Heart right ventricle (tissue), 16 donors: ENCODE measurements at regions of chr16 and their contacts with region 1.

Region 1: GRCh38 chr16:71311553-71312158 is 22.5 kb upstream of the CMTR2 start:
- DNase-seq: no peak
- ATAC-seq: no peak
- H3K4me3 ChIP-seq: no peak overlapping the region
- H3K27ac ChIP-seq: no peak overlapping the region
- H3K4me1 ChIP-seq: no peaks in the 10 kb centered on the region
- H3K27me3 ChIP-seq: peaks cover 0 to 46% (median 19%) of the 10 kb centered on the region in 7 donors
- CTCF ChIP-seq: peak; percentile 41 to 79 (median 69)

Region 2: DNA sequence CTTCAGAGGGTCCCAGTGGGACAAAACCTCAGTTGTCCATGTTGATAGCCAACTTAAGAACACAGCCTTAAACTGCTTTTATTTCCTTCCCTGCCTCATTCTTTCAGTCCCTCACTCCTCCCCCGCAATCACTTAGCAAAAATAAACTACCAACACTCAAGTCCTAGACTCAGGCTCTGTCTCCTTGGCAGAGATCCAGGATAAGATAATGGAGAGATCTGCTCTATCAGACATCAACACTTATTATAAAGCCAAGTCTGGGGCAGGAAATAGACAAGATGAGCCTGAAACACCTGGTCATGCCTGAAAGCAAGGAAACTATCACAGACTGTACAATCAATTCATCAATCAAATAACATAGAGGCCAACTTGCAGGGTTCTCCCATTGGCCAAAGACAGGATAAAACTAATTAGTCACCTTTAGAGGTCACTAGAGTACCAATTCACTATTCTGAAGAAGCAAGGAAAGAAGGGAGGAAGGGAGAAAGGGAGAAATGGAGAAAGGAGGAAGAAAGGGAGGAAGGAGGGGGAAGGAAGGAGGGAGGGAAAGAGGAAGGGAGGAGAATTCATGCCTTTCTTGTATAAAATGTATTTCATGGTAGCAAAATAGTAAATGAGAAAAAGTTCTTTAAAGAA is 96.8 kb before region 1 on chr16:
- intact Hi-C with region 1: loop called in 2 of 10 experiments (anchors 10 kb)
- DNase-seq: no peak
- ATAC-seq: no peak
- H3K4me3 ChIP-seq: no peak overlapping the region
- H3K27ac ChIP-seq: no peak overlapping the region
- H3K4me1 ChIP-seq: no peaks in the 10 kb centered on the region
- H3K27me3 ChIP-seq: peaks cover 0 to 6% (median 0%) of the 10 kb centered on the region in 7 donors
- CTCF ChIP-seq: peak in 4 of 9 donors; percentile 10 to 27 (median 14)

Region 3: GRCh38 chr16:71230122-71230845 is 81.4 kb before region 1 on chr16 and contains the start of gene HYDIN:
- intact Hi-C with region 1: loop called in 2 of 10 experiments (anchors 10 kb)
- DNase-seq: peak in 1 of 2 donors; percentile 10
- ATAC-seq: no peak
- H3K4me3 ChIP-seq: peak within 1 kb of the TSS in 3 of 10 donors; percentile 24 to 37 (median 34)
- H3K27ac ChIP-seq: no peak within 1 kb of the TSS
- H3K4me1 ChIP-seq: no peaks in the 10 kb centered on the region
- H3K27me3 ChIP-seq: peaks cover 0 to 38% (median 20%) of the 10 kb centered on the region in 7 donors
- CTCF ChIP-seq: no peak
- total RNA-seq, gene HYDIN: 0.74 to 3.1 (median 2.0) TPM

Region 4: GRCh38 chr16:71289734-71290062 is 22.0 kb before region 1 on chr16:
- intact Hi-C with region 1: loop called in 1 of 10 experiments (anchors 2 kb)
- DNase-seq: no peak
- ATAC-seq: no peak
- H3K4me3 ChIP-seq: peak overlapping the region; percentile 55 to 85 (median 72)
- H3K27ac ChIP-seq: peak overlapping the region in 9 of 10 donors; percentile 82 to 94 (median 90)
- H3K4me1 ChIP-seq: peaks cover 0 to 24% (median 13%) of the 10 kb centered on the region in 9 donors
- H3K27me3 ChIP-seq: peaks cover 0 to 31% (median 7%) of the 10 kb centered on the region in 7 donors
- CTCF ChIP-seq: no peak